K562 (cell line): ENCODE measurements at regions of chr12 and their contacts with region 1.

Region 1: DNA sequence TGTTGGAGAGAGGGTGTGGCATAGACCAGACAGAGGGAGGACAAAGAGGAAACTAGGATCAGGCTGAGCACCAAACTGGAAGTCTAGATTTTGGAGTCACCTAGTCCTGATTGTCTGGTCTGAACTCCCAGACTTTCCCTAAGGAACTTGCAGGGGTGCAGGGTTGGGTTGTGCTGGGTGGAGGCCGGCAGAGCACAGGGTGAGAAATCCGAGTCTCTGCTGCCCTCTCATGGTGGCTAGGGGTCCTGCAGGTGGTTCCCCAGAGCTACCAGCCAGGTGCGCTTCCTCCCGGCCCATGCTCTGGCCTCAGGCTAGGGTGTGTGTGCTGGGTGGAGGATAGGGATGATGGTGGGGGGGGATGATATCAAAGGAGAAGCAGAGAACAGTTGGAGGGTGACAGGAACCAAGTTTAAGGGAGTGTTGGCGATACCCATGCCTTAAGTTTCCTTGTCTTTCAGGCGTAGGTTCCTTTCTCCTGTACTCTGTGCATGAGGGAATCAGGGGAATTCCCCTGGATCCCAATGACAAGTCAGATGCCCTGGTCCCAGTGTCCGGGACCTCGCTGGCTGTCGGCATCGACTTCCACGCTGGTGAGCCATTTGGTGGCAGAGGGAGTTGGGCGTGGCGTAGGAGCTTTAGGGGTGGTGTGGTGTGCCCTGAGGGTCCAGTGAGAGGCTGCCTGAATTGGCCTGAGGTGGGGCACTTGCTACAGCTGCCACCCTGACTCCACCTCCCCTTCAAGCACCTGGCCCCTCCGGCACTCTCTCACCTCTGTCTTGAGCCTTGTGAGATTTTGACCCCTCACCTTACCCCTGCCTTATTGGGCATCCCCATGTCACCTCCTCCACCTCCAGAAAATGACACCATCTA is 33.4 kb upstream of the NXPH4 start:
- DNase-seq: peak; percentile 78 to 92 (median 90)
- ATAC-seq: peak; percentile 95
- H3K4me3 ChIP-seq: no peak overlapping the region
- H3K27ac ChIP-seq: no peak overlapping the region
- H3K4me1 ChIP-seq: peaks cover 0 to 37% of the 10 kb centered on the region in 2 experiments; a peak in 3 of 5 replicates
- H3K27me3 ChIP-seq: peaks cover 56 to 87% of the 10 kb centered on the region in 2 experiments
- CTCF ChIP-seq: peak; percentile 93 to 96 (median 93)
- EP300 ChIP-seq: no peak
- POLR2A ChIP-seq: no peak
- RAD21 ChIP-seq: peak; percentile 86 to 92

Region 2: DNA sequence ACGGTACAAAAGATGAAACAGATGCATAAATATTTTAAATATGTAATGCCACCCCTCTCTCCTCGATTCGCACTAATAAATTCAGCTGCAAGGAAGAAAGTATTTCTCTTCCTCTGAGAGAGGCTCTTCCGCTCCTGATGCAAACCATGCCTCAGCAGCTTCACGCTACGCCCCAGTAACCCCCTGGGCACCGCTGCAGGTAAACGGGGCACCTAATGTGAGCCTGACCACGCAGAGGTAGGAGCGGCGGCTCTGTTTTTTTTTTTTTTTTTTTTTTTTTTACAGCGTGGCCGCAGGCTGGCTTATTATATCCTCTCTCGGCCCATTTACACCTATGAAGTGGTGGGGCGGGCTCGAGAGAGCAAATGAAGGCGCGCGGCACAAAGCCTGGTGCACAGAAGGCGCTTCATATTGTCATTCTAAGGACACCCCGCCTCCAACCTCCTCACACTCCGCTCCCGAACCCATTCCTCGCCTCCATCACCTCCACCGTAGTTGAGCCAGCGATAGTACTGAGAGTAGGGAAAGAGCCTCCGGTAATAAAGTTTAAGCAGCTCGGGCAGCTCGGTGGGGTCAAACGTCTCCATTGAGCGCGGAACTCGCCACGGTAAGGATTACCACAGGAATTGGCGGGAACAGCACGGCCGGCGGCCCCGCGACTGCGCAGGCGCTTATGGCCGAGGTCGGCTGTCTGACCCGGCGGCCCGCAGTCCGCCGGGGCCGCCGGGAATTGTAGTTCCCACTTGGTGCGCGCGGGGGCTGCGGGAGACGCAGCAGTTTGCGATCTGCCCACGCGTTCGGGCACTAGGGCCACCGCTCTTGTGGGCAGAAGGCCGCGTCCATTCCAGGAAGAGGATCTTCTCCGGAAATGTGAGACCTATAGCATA is 431.2 kb before region 1 on chr12 and contains the start of gene PRIM1:
- CTCF ChIA-PET with region 1: no interaction called
- POLR2A ChIA-PET with region 1: interaction called, 3 read pairs
- in situ Hi-C with region 1: loop called (anchors 10 kb)
- intact Hi-C with region 1: no loop called
- DNase-seq: peak; percentile 90 to 96 (median 93)
- ATAC-seq: peak; percentile 90
- H3K4me3 ChIP-seq: peak within 1 kb of the TSS; percentile 72
- H3K27ac ChIP-seq: peak within 1 kb of the TSS; percentile 97
- H3K4me1 ChIP-seq: peaks cover 11 to 16% of the 10 kb centered on the region in 2 experiments; a peak in 4 of 5 replicates
- H3K27me3 ChIP-seq: no peaks in the 10 kb centered on the region
- CTCF ChIP-seq: no peak
- EP300 ChIP-seq: no peak
- POLR2A ChIP-seq: peak; percentile 94
- RAD21 ChIP-seq: no peak
- polyA plus RNA-seq, gene PRIM1: 175 to 179 TPM

Region 3: GRCh38 chr12:56884421-56884820 is 298.7 kb before region 1 on chr12:
- CTCF ChIA-PET with region 1: no interaction called
- POLR2A ChIA-PET with region 1: no interaction called
- in situ Hi-C with region 1: no loop called
- intact Hi-C with region 1: no loop called
- DNase-seq: no peak
- ATAC-seq: no peak
- H3K4me3 ChIP-seq: no peak overlapping the region
- H3K27ac ChIP-seq: no peak overlapping the region
- H3K4me1 ChIP-seq: peaks cover 2 to 5% of the 10 kb centered on the region in 2 experiments; a peak in 4 of 5 replicates
- H3K27me3 ChIP-seq: no peaks in the 10 kb centered on the region
- CTCF ChIP-seq: no peak
- EP300 ChIP-seq: no peak
- POLR2A ChIP-seq: no peak
- RAD21 ChIP-seq: no peak

Region 4: DNA sequence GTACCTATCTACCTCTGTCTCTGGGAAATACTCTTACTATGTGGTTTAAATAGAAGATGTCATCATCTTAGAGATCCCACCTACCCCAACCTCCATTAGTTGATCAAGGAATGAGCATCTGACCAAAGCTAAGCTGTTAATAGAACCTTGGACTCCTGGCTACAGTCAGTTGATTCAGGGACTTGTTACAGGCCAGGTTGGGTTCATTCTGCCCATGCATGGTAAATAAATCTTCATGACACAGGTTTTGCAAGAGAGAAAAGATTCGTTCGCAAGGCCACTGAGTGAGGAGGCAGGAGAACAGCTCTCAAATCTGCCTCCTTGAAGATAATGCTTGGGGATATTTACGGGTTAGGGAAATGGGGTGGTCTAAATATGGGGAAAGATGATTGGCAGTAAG is 268.4 kb before region 1 on chr12:
- CTCF ChIA-PET with region 1: no interaction called
- POLR2A ChIA-PET with region 1: no interaction called
- in situ Hi-C with region 1: no loop called
- intact Hi-C with region 1: no loop called
- DNase-seq: no peak
- ATAC-seq: no peak
- H3K4me3 ChIP-seq: no peak overlapping the region
- H3K27ac ChIP-seq: no peak overlapping the region
- H3K4me1 ChIP-seq: no peaks in the 10 kb centered on the region
- H3K27me3 ChIP-seq: no peaks in the 10 kb centered on the region
- CTCF ChIP-seq: no peak
- EP300 ChIP-seq: no peak
- POLR2A ChIP-seq: no peak
- RAD21 ChIP-seq: no peak

Region 5: DNA sequence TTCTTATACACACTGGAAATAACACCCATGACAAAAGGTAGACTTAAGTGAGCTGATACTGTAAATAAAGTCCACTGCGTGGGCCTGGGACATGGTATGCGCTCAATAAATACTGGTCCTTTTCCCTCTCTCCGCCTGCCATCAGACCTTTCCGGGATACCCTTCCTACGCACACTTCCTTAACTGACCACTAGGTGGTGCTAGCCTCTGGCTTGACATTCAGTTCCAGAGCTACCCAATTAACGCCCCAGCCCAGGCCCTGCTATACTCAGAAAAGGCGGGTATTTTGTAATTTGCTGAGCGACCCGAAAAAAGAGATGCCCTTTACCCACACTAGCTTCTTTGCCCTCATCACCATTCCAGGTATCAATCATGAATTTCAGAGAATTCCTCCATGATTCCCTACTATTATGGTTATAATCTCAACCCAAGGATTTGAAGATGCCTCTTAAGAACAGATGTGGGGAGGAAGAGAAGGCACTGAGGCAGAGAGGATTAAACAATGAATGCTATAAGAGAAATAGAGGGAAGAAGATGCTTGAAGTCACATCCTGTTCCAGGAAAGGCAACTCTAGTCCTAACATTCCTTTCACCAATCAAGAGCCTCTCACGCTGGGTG is 58.8 kb before region 1 on chr12:
- CTCF ChIA-PET with region 1: interaction called, 12 read pairs
- POLR2A ChIA-PET with region 1: interaction called, 6 read pairs
- in situ Hi-C with region 1: loop called (anchors 5 kb)
- intact Hi-C with region 1: loop called (anchors 1 kb)
- DNase-seq: peak; percentile 73 to 84 (median 76)
- ATAC-seq: peak; percentile 61
- H3K4me3 ChIP-seq: no peak overlapping the region
- H3K27ac ChIP-seq: no peak overlapping the region
- H3K4me1 ChIP-seq: peaks cover 10 to 25% of the 10 kb centered on the region in 2 experiments
- H3K27me3 ChIP-seq: no peaks in the 10 kb centered on the region
- CTCF ChIP-seq: peak; percentile 88 to 92 (median 91)
- EP300 ChIP-seq: no peak
- POLR2A ChIP-seq: no peak
- RAD21 ChIP-seq: peak; percentile 77 to 82

Region 6: GRCh38 chr12:57817261-57817989 is 634.3 kb after region 1 on chr12:
- CTCF ChIA-PET with region 1: no interaction called
- POLR2A ChIA-PET with region 1: no interaction called
- in situ Hi-C with region 1: no loop called
- intact Hi-C with region 1: no loop called
- DNase-seq: no peak
- ATAC-seq: no peak
- H3K4me3 ChIP-seq: no peak overlapping the region
- H3K27ac ChIP-seq: peak overlapping the region; percentile 37; the same call in 2 of the 3 replicates
- H3K4me1 ChIP-seq: peaks cover 9 to 17% of the 10 kb centered on the region in 2 experiments; a peak in 3 of 5 replicates
- H3K27me3 ChIP-seq: no peaks in the 10 kb centered on the region
- CTCF ChIP-seq: no peak
- EP300 ChIP-seq: no peak
- POLR2A ChIP-seq: no peak
- RAD21 ChIP-seq: no peak